ENCODE measurements at regions of chr21 and their contacts with region 1.

Region 1: GRCh38 chr21:28992526-28993292 is at the start of gene LTN1:
- DNase-seq: peak; percentile 97 to 100 (median 98)
- ATAC-seq: peak; percentile 91
- H3K4me3 ChIP-seq: peak within 1 kb of the TSS; percentile 95
- H3K4me3 Mint-ChIP-seq: peak within 1 kb of the TSS; percentile 97
- H3K27ac ChIP-seq: peak within 1 kb of the TSS; percentile 75 to 94
- H3K27ac Mint-ChIP-seq: peak within 1 kb of the TSS; percentile 91
- H3K4me1 ChIP-seq: peaks cover 22% of the 10 kb centered on the region
- H3K4me1 Mint-ChIP-seq: peaks cover 39% of the 10 kb centered on the region
- H3K27me3 ChIP-seq: no peaks in the 10 kb centered on the region
- H3K27me3 Mint-ChIP-seq: no peaks in the 10 kb centered on the region
- CTCF ChIP-seq: no peak
- total RNA-seq, gene LTN1: 23.6 to 24.3 TPM

Region 2: DNA sequence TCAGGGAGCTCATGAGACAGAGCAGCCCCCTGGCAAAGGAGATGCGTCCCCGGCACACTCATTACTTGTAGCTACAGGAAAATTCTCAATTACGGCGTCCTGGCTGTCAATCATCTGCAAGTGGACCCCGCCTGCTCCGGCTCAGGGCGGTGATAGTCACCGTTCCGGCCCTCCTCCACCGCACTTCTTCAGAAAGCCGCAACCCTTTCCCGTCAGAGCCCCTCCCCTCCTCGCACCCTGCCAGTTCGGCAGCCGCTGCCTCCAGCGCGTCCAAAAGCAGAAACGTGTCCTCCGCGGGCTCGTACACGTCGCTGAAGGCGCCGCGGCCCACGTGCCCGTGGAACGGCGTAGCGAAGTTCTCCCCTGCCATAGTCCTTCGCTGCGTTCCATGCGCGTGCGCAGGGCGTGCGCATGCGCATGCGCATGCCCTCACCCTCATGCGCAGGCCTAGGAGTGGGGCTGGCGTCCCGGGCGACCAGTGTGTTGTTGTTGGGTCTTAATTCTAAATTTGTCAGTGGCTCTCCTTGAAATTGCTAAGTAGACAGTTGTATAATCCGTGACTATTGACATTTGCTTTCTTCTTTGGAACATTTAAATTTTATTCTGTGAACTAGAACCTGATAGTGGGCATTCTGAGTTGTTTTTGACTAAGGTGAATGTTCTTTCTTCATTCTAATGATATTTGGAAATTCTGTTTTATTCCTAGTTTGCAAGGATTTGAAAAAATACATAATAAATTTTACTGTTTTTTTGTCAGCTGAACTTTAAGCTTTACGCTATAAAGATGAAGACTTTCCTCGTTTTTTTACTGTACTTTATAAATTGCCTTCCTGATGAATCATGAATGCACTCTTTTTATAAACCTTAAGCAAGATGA is 107.5 kb before region 1 on chr21:
- CTCF ChIA-PET with region 1: no interaction called
- POLR2A ChIA-PET with region 1: interaction called, 3 read pairs
- intact Hi-C with region 1: loop called (anchors 5 to 10 kb)
- DNase-seq: peak; percentile 81 to 98 (median 90)
- ATAC-seq: peak; percentile 94
- H3K4me3 ChIP-seq: peak overlapping the region; percentile 62
- H3K4me3 Mint-ChIP-seq: peak overlapping the region; percentile 93
- H3K27ac ChIP-seq: peak overlapping the region; percentile 88 to 91
- H3K27ac Mint-ChIP-seq: peak overlapping the region; percentile 97
- H3K4me1 ChIP-seq: peaks cover 11% of the 10 kb centered on the region
- H3K4me1 Mint-ChIP-seq: peaks cover 23% of the 10 kb centered on the region
- H3K27me3 ChIP-seq: no peaks in the 10 kb centered on the region
- H3K27me3 Mint-ChIP-seq: no peaks in the 10 kb centered on the region
- CTCF ChIP-seq: no peak

Region 3: DNA sequence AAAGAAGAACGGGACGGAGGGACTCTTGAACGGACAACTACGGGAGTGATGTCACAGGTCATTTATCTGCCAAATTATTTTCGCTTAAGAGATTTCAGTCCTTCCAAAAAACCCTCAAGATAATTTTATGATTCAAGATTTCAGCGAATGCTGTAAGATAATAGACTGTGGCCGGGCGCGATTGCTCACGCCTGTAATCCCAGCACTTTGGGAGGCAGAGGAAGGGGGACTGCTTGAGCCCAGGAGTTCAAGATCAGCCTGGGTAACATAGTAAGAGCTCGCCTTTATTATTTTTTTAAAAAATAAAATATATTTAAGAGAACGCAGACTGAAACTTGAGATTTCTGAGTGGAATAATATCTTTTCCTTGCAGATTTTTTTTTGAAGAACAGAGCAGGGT is 25.8 kb after region 1 on chr21:
- CTCF ChIA-PET with region 1: interaction called, 4 read pairs
- POLR2A ChIA-PET with region 1: interaction called, 132 read pairs
- intact Hi-C with region 1: no loop called
- DNase-seq: peak in 1 of 14 experiments; percentile 16
- ATAC-seq: peak; percentile 7
- H3K4me3 ChIP-seq: peak overlapping the region; percentile 94
- H3K4me3 Mint-ChIP-seq: peak overlapping the region; percentile 92
- H3K27ac ChIP-seq: peak overlapping the region; percentile 82 to 85
- H3K27ac Mint-ChIP-seq: peak overlapping the region; percentile 93
- H3K4me1 ChIP-seq: peaks cover 40% of the 10 kb centered on the region
- H3K4me1 Mint-ChIP-seq: peaks cover 35% of the 10 kb centered on the region
- H3K27me3 ChIP-seq: no peaks in the 10 kb centered on the region
- H3K27me3 Mint-ChIP-seq: no peaks in the 10 kb centered on the region
- CTCF ChIP-seq: no peak

Region 4: DNA sequence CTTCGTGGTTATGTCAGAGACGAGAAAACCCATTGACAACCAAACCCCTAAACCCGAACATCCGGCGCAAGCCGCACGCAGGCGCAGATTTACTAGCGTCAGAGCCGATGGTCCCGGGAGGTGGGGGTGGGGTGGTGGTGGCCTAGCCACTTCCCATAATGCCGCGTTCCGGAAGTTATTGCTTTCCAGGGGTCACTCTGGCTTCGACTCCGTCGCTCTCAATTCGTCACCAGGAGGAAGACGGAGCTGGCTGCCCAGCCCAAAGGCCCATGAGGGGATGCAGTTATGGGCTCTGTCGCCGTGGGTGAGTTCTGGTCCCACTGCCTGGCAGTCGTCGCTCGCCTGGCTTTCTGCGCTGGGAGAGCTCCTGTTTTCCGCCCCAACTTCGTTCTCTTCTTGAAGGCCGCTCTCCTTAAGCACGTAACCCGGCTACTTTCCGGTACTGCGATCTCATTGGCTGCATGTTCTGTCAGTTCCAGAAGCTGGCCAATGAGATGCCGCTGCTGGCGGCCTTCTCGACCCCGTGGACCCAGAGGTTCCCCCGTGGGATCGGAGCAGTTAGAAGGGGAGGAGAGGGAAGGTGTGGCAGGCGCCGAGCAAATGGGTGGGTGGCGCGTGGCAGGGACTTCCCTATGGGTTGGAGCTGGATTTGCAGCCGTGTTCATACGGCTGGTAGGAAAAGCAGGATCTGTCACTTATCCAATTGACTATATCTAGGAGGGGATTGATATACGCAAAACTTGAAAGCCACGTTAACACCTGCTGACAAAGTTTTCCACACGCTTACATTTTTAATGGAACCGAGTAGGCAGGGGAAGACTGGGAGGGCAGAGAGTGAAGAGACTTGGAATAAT is 32.0 kb after region 1 on chr21 and contains the start of gene USP16:
- CTCF ChIA-PET with region 1: interaction called, 23 read pairs
- POLR2A ChIA-PET with region 1: interaction called, 132 read pairs
- intact Hi-C with region 1: loop called (anchors 1 kb)
- DNase-seq: peak; percentile 86 to 98 (median 90)
- ATAC-seq: peak; percentile 87
- H3K4me3 ChIP-seq: peak within 1 kb of the TSS; percentile 78
- H3K4me3 Mint-ChIP-seq: peak within 1 kb of the TSS; percentile 97
- H3K27ac ChIP-seq: peak within 1 kb of the TSS; percentile 97
- H3K27ac Mint-ChIP-seq: peak within 1 kb of the TSS; percentile 99
- H3K4me1 ChIP-seq: peaks cover 44% of the 10 kb centered on the region
- H3K4me1 Mint-ChIP-seq: peaks cover 61% of the 10 kb centered on the region
- H3K27me3 ChIP-seq: no peaks in the 10 kb centered on the region
- H3K27me3 Mint-ChIP-seq: no peaks in the 10 kb centered on the region
- CTCF ChIP-seq: no peak
- total RNA-seq, gene USP16: 79.7 to 81.7 TPM

Region 5: GRCh38 chr21:29078869-29079767 is 86.4 kb after region 1 on chr21:
- CTCF ChIA-PET with region 1: interaction called, 3 read pairs
- POLR2A ChIA-PET with region 1: interaction called, 16 read pairs
- intact Hi-C with region 1: no loop called
- DNase-seq: peak in 5 of 14 experiments; percentile 5 to 75 (median 63)
- ATAC-seq: peak; percentile 18
- H3K4me3 ChIP-seq: no peak overlapping the region
- H3K4me3 Mint-ChIP-seq: peak overlapping the region; percentile 64
- H3K27ac ChIP-seq: peak overlapping the region; percentile 58
- H3K27ac Mint-ChIP-seq: peak overlapping the region; percentile 95
- H3K4me1 ChIP-seq: peaks cover 41% of the 10 kb centered on the region
- H3K4me1 Mint-ChIP-seq: peaks cover 65% of the 10 kb centered on the region
- H3K27me3 ChIP-seq: no peaks in the 10 kb centered on the region
- H3K27me3 Mint-ChIP-seq: no peaks in the 10 kb centered on the region
- CTCF ChIP-seq: no peak

Region 6: GRCh38 chr21:29449306-29449950 is 456.7 kb after region 1 on chr21:
- CTCF ChIA-PET with region 1: no interaction called
- POLR2A ChIA-PET with region 1: interaction called, 12 read pairs
- intact Hi-C with region 1: no loop called
- DNase-seq: peak in 5 of 14 experiments; percentile 11 to 87 (median 63)
- ATAC-seq: peak; percentile 86
- H3K4me3 ChIP-seq: peak overlapping the region; percentile 1
- H3K4me3 Mint-ChIP-seq: peak overlapping the region; percentile 39
- H3K27ac ChIP-seq: peak overlapping the region; percentile 56 to 67
- H3K27ac Mint-ChIP-seq: peak overlapping the region; percentile 94
- H3K4me1 ChIP-seq: peaks cover 14% of the 10 kb centered on the region
- H3K4me1 Mint-ChIP-seq: peaks cover 40% of the 10 kb centered on the region
- H3K27me3 ChIP-seq: no peaks in the 10 kb centered on the region
- H3K27me3 Mint-ChIP-seq: no peaks in the 10 kb centered on the region
- CTCF ChIP-seq: peak; percentile 15